ENCODE measurements at regions of chr19 and their contacts with region 1.

Region 1: DNA sequence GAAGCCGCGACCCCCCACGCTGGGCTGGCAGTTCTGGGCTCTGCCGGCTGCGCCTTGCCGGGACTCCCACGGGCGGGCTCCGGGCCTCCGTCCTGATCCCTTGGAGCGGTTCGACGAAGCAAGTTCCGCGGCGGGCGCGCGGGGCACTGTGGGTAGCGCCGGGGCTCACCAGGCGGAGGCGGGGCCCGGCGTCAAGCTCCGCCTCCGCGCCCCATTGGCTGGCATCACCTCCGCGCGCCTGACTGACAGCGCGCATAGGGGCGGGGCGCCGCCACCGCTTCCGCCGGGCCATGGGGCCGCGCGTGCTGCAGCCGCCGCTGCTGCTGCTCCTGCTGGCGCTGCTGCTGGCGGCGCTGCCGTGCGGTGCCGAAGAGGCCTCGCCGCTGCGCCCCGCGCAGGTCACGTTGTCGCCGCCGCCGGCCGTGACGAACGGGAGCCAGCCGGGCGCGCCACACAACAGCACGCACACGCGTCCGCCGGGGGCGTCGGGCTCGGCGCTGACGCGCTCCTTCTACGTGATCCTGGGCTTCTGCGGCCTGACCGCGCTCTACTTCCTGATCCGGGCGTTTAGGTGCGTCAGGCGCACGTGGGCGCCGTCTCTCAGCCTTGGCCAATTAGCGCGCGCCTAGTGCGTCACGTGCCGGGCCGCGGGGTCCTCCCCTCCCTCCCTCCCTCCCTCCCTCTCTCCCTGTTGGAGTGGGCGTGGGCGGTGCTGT is at the start of gene FAM174C:
- DNase-seq: peak; percentile 95 to 97 (median 97)
- ATAC-seq: peak; percentile 51 to 86 (median 82)
- H3K4me3 ChIP-seq: peak within 1 kb of the TSS; percentile 48 to 98 (median 73)
- H3K27ac ChIP-seq: peak within 1 kb of the TSS; percentile 86 to 100 (median 98)
- H3K4me1 ChIP-seq: peaks cover 8 to 70% (median 59%) of the 10 kb centered on the region in 12 donors
- H3K27me3 ChIP-seq: no peaks in the 10 kb centered on the region
- CTCF ChIP-seq: no peak
- POLR2A ChIP-seq: peak in 1 of 2 donors; percentile 80
- total RNA-seq, gene FAM174C: 11.6 to 46.7 (median 18.7) TPM

Region 2: GRCh38 chr19:788983-789700 is 486.3 kb before region 1 on chr19:
- intact Hi-C with region 1: no loop called
- DNase-seq: peak in 4 of 5 donors; percentile 75 to 80 (median 78)
- ATAC-seq: peak; percentile 50 to 88 (median 78)
- H3K4me3 ChIP-seq: peak overlapping the region in 9 of 12 donors; percentile 11 to 28 (median 15)
- H3K27ac ChIP-seq: peak overlapping the region; percentile 57 to 86 (median 75)
- H3K4me1 ChIP-seq: peaks cover 7 to 59% (median 32%) of the 10 kb centered on the region in 12 donors
- H3K27me3 ChIP-seq: no peaks in the 10 kb centered on the region
- CTCF ChIP-seq: peak in 2 of 12 donors; percentile 7 to 22
- POLR2A ChIP-seq: no peak

Region 3: DNA sequence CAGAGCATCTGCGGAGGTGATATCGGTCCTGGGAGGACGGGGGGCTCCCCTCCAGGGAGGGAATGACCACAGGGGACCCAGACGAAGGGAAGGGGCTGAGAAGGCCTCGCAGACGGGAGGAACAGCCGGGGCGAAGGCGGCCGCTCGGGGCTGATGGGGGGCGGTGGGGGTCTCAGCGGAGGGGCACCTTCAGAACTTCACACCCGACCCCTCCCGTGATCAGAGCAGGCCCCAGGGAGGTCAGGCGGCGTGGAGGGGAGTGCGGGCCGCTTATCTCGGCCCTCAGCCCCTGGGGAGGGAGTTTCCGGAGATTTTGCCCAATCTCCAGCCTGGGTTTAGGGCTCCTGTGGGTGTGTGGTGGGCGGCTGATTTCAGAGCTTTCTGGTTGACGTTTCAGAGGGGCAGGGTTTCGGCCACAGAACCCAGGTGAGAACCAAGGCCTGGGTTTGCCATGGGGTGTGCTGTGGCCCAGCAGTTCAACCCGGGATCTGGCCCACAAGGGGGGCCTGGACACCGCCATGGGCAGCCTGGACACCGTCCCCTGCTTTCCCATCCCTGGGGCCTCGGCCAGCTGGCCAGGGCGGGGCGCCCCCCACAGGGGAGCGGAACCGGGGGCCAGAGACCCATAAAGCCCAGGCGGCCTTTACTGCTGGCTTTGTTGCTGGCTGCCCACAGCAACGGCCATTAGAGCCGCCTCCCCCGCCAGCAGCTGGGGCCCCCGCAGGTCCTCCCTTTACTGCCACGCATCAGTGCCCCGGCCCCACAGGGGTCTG is 320.6 kb before region 1 on chr19:
- intact Hi-C with region 1: no loop called
- DNase-seq: no peak
- ATAC-seq: peak in 2 of 4 donors; percentile 9 to 16
- H3K4me3 ChIP-seq: no peak overlapping the region
- H3K27ac ChIP-seq: no peak overlapping the region
- H3K4me1 ChIP-seq: peaks cover 0 to 13% (median 0%) of the 10 kb centered on the region in 12 donors
- H3K27me3 ChIP-seq: no peaks in the 10 kb centered on the region
- CTCF ChIP-seq: no peak
- POLR2A ChIP-seq: no peak

Region 4: GRCh38 chr19:1373534-1374249 is 98.3 kb after region 1 on chr19:
- intact Hi-C with region 1: loop called in 2 of 10 experiments (anchors 10 kb)
- DNase-seq: peak; percentile 77 to 92 (median 85)
- ATAC-seq: peak; percentile 74 to 90 (median 80)
- H3K4me3 ChIP-seq: peak overlapping the region in 1 of 12 donors; percentile 2
- H3K27ac ChIP-seq: peak overlapping the region; percentile 51 to 92 (median 84)
- H3K4me1 ChIP-seq: peaks cover 0 to 30% (median 16%) of the 10 kb centered on the region in 12 donors
- H3K27me3 ChIP-seq: no peaks in the 10 kb centered on the region
- CTCF ChIP-seq: no peak
- POLR2A ChIP-seq: no peak

Region 5: DNA sequence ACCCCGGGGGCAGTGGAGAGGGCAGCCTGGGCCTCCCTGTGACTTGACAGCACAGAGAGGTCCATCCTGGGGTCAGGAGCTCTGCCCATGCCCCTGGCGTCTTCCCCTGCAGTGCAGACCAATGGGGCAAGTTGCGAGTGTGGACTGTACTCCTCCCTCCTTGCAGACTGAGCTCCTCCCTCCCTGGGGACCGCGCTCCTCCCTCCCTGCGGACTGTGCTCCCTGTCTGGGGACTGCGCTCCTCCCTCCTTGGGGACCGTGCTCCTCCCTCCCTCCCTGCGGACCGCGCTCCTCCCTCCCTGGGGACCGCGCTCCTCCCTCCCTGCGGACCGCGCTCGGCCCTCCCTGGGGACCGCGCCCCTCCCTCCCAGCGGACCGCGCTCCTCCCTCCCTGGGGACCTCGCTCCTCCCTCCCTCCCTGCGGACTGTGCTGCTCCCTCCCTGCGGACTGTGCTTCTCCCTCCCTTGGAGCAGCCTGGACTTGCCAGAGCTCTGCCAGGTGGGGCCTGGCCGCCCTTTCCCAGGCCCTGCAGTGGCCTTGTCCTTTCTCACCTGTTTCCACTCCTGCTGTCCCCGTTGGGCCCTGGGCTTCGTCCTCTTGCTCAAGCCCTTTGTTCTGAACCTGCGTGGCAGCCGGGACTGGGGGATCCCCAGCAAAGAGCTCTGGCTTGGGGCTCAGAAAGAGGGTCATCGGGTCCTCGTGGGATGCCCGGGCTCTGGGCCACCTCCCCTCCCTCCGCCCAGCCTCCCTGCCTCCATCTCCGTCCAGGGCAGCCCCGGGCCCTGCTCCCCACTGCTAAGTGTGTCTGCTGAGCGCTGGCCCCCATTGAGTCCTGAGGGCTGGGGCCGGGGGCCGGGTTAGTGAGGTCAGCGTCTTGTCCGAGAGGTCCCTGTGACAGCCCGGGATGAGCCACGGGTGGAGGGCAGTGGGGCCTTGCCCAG is 119.1 kb after region 1 on chr19:
- intact Hi-C with region 1: loop called in 2 of 10 experiments (anchors 10 kb)
- DNase-seq: peak in 1 of 5 donors; percentile 29
- ATAC-seq: peak in 3 of 4 donors; percentile 2 to 18 (median 4)
- H3K4me3 ChIP-seq: no peak overlapping the region
- H3K27ac ChIP-seq: no peak overlapping the region
- H3K4me1 ChIP-seq: peaks cover 4 to 29% (median 18%) of the 10 kb centered on the region in 12 donors
- H3K27me3 ChIP-seq: no peaks in the 10 kb centered on the region
- CTCF ChIP-seq: no peak
- POLR2A ChIP-seq: no peak

Region 6: DNA sequence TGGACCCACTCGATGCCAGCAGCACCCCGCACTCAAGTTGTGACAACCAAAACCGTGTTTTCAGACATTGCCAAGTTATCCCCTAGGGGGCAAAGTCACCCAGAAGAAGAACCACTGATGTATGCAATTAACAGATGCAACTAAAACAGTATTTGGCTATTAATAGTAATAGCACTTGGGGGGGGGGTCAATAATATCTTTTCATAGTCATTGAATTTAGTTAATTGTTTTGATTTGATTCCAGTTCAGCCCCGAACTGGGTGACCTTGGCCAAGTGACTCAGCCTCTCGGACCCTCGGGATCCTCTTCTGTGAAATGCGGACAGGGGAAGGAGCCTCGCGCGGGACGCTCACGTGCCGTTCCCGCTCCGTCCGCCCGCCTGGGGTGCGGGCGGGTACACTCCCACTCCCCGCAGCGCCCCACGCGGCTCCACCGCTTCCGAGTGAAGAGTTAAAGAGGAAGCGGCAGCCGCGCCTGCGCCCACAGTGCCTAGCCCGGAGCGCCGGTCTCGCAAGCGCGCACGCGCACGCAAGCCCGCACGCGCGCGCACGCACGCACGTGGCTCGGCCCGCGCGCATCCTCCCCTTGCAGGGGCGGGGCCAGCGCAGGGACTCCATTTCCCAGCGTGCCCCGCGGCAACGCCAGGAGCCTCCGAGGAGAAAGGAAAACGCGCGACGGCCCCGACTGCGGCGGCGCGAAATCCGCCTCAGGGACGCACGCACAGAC is 131.5 kb after region 1 on chr19:
- intact Hi-C with region 1: loop called in 4 of 10 experiments (anchors 5 to 10 kb)
- DNase-seq: peak; percentile 99 to 100 (median 100)
- ATAC-seq: peak; percentile 89 to 92 (median 90)
- H3K4me3 ChIP-seq: peak overlapping the region in 11 of 12 donors; percentile 31 to 100 (median 85)
- H3K27ac ChIP-seq: peak overlapping the region; percentile 39 to 98 (median 84)
- H3K4me1 ChIP-seq: peaks cover 24 to 54% (median 38%) of the 10 kb centered on the region in 12 donors
- H3K27me3 ChIP-seq: peaks cover 0 to 13% (median 0%) of the 10 kb centered on the region in 9 donors
- CTCF ChIP-seq: peak in 8 of 12 donors; percentile 22 to 46 (median 30)
- POLR2A ChIP-seq: peak in 1 of 2 donors; percentile 71

Region 7: DNA sequence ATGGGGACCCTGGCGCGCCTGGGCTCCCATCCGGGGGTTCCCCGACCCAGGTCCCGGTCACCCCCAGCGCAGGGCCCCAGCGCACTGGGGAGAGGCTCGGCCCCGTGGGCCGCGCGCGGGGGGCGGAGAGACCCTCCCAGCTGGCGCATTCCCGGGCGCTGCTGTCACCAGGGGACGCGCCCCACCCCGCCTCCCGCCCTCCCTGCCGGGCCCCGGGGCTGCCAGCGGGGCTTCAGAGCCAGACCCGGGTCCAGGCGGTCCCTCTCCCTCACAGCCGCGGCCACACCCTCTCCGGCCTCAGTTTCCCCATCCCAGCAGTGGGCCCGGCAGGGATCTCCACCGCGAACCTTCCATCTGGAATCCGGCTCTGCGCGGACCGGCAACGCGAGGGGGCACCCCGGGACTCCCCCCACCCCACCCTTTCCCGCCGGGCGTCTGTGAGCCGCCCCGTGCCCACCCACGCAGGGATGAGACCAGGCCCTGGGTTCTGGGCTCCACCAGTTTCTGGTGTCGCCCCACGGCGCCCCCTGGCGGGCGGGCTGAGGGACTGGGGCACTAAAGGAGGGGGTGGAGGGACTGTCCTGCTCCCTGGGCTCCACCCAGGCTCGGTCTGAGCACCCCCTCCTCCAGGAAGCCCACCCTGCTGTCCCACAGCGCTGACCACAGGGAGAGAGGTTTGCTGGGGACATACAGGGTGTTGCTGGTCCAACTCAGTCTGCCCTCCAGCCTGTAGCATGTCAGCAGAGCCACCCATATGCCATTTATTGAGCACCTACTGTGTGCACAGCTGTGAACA is 238.3 kb after region 1 on chr19:
- intact Hi-C with region 1: loop called in 2 of 10 experiments (anchors 5 to 10 kb)
- DNase-seq: peak in 3 of 5 donors; percentile 56 to 84 (median 72)
- ATAC-seq: peak; percentile 19 to 60 (median 38)
- H3K4me3 ChIP-seq: peak overlapping the region; percentile 50 to 83 (median 60)
- H3K27ac ChIP-seq: peak overlapping the region; percentile 62 to 97 (median 88)
- H3K4me1 ChIP-seq: peaks cover 0 to 40% (median 7%) of the 10 kb centered on the region in 12 donors
- H3K27me3 ChIP-seq: peaks cover 0 to 35% (median 5%) of the 10 kb centered on the region in 9 donors
- CTCF ChIP-seq: peak in 11 of 12 donors; percentile 37 to 64 (median 61)
- POLR2A ChIP-seq: no peak

Region 8: GRCh38 chr19:2050991-2051772 is 775.8 kb after region 1 on chr19 and contains the start of gene MKNK2:
- intact Hi-C with region 1: loop called in 1 of 10 experiments (anchors 10 kb)
- DNase-seq: peak; percentile 94 to 98 (median 94)
- ATAC-seq: peak; percentile 53 to 78 (median 70)
- H3K4me3 ChIP-seq: peak within 1 kb of the TSS; percentile 71 to 99 (median 95)
- H3K27ac ChIP-seq: peak within 1 kb of the TSS; percentile 83 to 99 (median 96)
- H3K4me1 ChIP-seq: peaks cover 24 to 79% (median 66%) of the 10 kb centered on the region in 12 donors
- H3K27me3 ChIP-seq: no peaks in the 10 kb centered on the region
- CTCF ChIP-seq: peak; percentile 48 to 80 (median 63)
- POLR2A ChIP-seq: peak; percentile 99
- total RNA-seq, gene MKNK2: 129 to 318 (median 155) TPM